Prostate gland (tissue), 2 donors: ENCODE measurements at regions of chr6 and their contacts with region 1.

Region 1: DNA sequence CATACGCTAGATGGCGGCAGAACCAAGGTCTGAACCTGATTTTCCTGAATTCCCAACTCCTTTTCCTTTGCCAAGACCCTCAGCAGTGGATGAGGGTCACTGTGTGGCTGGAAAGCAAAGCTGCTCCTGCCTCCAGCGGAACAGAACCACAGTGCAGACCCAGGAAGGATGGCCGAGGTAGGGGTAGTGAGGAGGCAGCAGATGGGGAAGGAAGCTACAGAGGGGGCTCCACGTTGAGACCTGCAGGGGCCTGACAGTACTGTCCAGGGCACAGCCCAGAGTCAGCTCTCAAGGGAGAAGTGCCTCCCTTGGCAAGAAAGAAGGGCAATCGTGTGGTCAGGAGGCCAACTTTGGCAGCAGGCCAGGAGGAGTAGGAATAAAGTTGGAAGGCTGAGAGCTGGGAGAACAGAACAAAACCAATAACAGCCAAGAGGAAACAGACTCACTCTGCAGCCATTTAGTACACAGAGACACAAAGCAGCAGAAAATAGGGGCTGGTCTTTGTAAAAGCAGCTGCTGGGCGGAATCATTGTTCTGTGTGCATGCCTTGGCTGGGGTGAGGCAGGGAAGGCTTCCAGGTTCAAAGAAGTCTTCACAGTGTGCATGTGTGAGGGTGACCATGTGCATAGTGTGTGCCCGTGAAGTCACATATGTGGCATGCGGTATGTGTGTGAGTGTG is 3.1 kb downstream of the GABRR2 start:
- DNase-seq: peak; percentile 59
- H3K4me3 ChIP-seq: peak overlapping the region in 1 of 2 donors; percentile 3
- H3K27ac ChIP-seq: peak overlapping the region; percentile 43 to 73
- H3K4me1 ChIP-seq: peaks cover 3% of the 10 kb centered on the region
- H3K27me3 ChIP-seq: no peaks in the 10 kb centered on the region
- CTCF ChIP-seq: peak in 3 of 4 experiments; percentile 56 to 71 (median 59)
- POLR2A ChIP-seq: no peak

Region 2: GRCh38 chr6:87692086-87692485 is 1619.9 kb before region 1 on chr6:
- intact Hi-C with region 1: no loop called
- DNase-seq: no peak
- H3K4me3 ChIP-seq: no peak overlapping the region
- H3K27ac ChIP-seq: no peak overlapping the region
- H3K4me1 ChIP-seq: peaks cover 3% of the 10 kb centered on the region
- H3K27me3 ChIP-seq: no peaks in the 10 kb centered on the region
- CTCF ChIP-seq: no peak
- POLR2A ChIP-seq: no peak

Region 3: DNA sequence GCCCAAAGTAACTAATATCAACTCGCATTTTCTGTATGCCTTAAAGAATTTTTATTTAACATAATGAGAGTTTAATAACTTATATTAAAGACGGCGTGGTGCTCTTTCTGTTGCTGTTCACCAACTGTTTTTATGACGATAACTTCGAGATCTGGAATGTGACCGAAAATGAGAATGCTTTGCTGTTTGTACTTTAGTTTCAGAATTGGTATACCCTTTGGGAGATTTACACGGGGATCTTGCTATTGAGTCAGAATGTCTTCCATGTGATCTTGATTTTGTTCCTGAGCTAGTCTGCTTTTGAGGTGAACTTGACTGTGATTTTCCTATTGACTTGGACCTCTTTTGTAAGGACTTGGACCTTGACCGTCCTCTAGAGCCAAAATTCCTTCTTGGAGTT is 213.5 kb before region 1 on chr6:
- intact Hi-C with region 1: no loop called
- DNase-seq: no peak
- H3K4me3 ChIP-seq: no peak overlapping the region
- H3K27ac ChIP-seq: no peak overlapping the region
- H3K4me1 ChIP-seq: no peaks in the 10 kb centered on the region
- H3K27me3 ChIP-seq: no peaks in the 10 kb centered on the region
- CTCF ChIP-seq: no peak
- POLR2A ChIP-seq: no peak

Region 4: DNA sequence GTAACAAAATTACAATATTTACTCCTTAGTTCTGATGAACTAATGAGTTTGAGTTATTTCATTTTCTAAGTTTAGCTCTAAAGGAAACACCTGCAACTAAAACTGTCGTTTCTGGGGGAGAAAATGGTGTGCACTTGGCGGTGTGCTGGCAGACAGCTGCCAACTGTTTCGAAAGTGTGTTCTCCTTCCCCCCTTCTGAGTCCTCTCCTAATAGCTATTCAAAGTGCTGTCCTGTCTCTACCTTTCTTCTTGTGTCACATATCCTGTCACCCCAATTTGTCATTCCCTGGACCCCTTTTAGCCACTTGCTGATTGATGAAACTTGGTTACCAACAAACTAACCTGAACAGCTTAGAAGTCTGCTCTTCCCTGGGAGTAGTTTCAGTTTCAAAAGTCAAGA is 45.4 kb after region 1 on chr6:
- intact Hi-C with region 1: no loop called
- DNase-seq: no peak
- H3K4me3 ChIP-seq: no peak overlapping the region
- H3K27ac ChIP-seq: no peak overlapping the region
- H3K4me1 ChIP-seq: no peaks in the 10 kb centered on the region
- H3K27me3 ChIP-seq: no peaks in the 10 kb centered on the region
- CTCF ChIP-seq: no peak
- POLR2A ChIP-seq: no peak

Region 5: DNA sequence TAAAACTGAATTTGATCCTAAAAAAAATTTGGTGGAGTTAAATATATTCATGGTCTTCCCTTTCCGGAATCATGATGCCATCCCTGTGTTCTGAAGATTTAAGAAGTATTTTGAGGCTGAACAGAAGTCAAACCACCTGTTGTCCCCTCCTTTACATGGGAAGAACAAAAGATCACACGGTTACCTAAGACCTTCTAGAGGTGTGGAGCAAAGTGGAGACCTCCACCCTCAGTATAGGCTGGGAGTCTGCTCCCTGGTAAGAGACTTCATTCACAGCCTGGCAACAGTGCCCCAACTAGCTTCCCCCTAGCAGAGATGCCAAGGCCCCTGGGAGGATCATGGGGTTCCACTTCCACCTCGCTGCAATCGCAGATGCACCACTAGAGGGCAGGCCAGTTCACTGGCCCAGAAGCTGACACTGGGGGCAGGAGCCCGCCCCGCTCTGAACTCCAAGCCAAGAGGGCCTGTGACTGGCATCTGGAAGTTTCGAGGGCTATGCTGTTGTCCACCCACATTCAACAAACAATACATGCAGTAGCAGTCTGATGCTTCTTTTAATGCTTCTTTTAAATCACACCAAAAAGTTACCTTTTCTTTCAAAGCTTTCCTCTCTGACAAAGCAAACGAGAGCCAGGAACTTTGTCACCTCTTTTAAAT is 60.0 kb after region 1 on chr6:
- intact Hi-C with region 1: loop called (anchors 5 kb)
- DNase-seq: peak; percentile 49
- H3K4me3 ChIP-seq: no peak overlapping the region
- H3K27ac ChIP-seq: peak overlapping the region in 1 of 2 donors; percentile 32
- H3K4me1 ChIP-seq: no peaks in the 10 kb centered on the region
- H3K27me3 ChIP-seq: no peaks in the 10 kb centered on the region
- CTCF ChIP-seq: peak; percentile 70 to 81 (median 74)
- POLR2A ChIP-seq: no peak